AG04449 (cell line): ENCODE measurements at regions of chr17 and their contacts with region 1.

Region 1: DNA sequence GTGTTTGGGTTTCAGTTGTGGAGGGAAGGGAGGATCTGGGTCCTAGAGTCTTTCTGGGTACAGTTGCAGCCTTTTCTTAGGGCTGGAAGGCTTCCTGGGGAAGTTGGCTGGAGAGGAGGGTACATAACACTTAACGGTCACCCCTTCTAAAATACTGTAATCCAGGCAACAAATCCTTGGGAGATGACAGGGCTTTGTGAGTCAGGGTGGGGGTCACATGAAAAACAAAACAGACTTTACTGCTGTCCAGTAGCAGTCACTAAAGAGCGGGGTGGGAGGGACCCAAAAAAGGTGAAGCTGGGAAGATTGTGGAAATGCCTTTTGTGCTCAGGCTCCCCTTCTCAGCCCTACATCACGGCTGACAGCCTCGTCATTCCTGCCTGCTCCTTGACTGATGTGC is 6.3 kb downstream of the SAP30BP start:
- DNase-seq: no peak
- H3K4me3 ChIP-seq: no peak overlapping the region
- CTCF ChIP-seq: no peak

Region 2: DNA sequence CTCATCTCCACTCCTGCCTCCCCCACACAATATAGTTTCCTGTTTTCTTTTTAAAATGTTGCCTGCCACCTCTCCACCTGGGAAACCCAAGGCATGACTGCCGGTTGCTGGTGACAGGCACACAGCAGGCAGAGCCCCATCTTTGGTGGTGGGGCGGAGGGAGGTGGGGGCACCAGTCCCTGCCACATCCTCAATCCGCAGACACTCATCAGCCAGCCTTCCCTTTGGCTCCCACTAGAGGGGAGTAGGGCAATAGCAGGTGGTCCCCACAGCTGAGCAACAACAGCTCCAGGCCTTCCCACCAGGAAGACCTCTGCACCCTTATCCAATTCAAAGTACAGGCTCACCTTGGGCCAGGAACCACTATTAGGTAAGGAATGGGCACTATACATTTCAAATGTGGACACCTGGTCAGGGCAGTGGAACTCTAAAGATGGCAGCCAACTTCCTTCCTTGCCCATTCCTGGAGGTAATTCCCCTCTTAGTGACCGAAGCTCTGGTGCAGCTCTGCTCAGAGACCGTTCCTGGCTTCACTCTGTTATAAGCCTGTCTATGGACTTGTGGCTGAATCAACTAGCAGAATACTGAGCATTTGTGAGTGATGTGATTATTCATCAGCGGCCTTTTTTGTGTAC is 20.5 kb before region 1 on chr17:
- CTCF ChIA-PET with region 1: interaction called, 18 read pairs
- POLR2A ChIA-PET with region 1: no interaction called
- DNase-seq: no peak
- H3K4me3 ChIP-seq: no peak overlapping the region
- CTCF ChIP-seq: peak; percentile 78

Region 3: GRCh38 chr17:75693500-75694481 is 20.3 kb after region 1 on chr17:
- CTCF ChIA-PET with region 1: interaction called, 121 read pairs
- POLR2A ChIA-PET with region 1: interaction called, 4 read pairs
- DNase-seq: peak; percentile 84
- H3K4me3 ChIP-seq: no peak overlapping the region; the same call in 1 of the 2 replicates
- CTCF ChIP-seq: peak; percentile 41